ENCODE measurements at regions of chr22 and their contacts with region 1.

Region 1: GRCh38 chr22:25696763-25697667 is 45.0 kb upstream of the MYO18B start:
- DNase-seq: peak in 1 of 2 donors; percentile 34
- H3K4me3 ChIP-seq: no peak overlapping the region
- H3K27ac ChIP-seq: no peak overlapping the region
- H3K4me1 ChIP-seq: no peaks in the 10 kb centered on the region
- H3K27me3 ChIP-seq: no peaks in the 10 kb centered on the region
- CTCF ChIP-seq: no peak
- EP300 ChIP-seq: no peak
- POLR2A ChIP-seq: no peak

Region 2: GRCh38 chr22:25475257-25476022 is 221.6 kb before region 1 on chr22:
- intact Hi-C with region 1: loop called (anchors 10 kb)
- DNase-seq: peak in 1 of 2 donors; percentile 88
- H3K4me3 ChIP-seq: no peak overlapping the region
- H3K27ac ChIP-seq: no peak overlapping the region
- H3K4me1 ChIP-seq: peaks cover 8 to 11% (median 9%) of the 10 kb centered on the region in 4 donors
- H3K27me3 ChIP-seq: no peaks in the 10 kb centered on the region
- CTCF ChIP-seq: no peak
- EP300 ChIP-seq: no peak
- POLR2A ChIP-seq: no peak

Measured in stomach (tissue), 19 donors.